ENCODE measurements at regions of chr17 and their contacts with region 1.

Region 1: DNA sequence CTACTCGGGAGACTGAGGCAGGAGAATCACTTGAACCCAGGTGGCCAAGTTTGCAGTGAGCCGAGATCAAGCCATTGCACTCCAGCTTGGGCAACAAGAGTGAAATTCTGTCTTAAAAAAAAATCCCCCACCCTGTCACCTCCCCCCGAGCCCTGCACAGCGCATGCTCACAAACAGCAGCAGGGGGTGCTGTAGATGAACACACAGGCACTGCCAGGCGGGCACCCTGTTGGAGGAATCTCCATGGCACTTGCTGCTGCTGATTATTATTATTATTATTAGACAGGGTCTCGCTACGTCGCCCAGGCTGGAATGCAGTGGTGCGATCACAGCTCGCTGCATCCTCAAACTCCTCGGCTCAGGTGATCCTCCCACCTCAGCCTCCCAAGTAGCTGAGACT is 24.6 kb downstream of the FZD2 start:
- DNase-seq: no peak
- H3K4me3 ChIP-seq: no peak overlapping the region
- H3K27ac ChIP-seq: no peak overlapping the region
- H3K4me1 ChIP-seq: no peaks in the 10 kb centered on the region
- H3K27me3 ChIP-seq: peaks cover 2% of the 10 kb centered on the region
- CTCF ChIP-seq: peak in 1 of 2 donors; percentile 7

Region 2: GRCh38 chr17:43940630-43941029 is 641.2 kb before region 1 on chr17:
- CTCF ChIA-PET with region 1: no interaction called
- dilution Hi-C with region 1: no loop called
- in situ Hi-C with region 1: no loop called
- intact Hi-C with region 1: no loop called
- DNase-seq: no peak
- H3K4me3 ChIP-seq: no peak overlapping the region
- H3K27ac ChIP-seq: no peak overlapping the region
- H3K4me1 ChIP-seq: peaks cover 9% of the 10 kb centered on the region
- H3K27me3 ChIP-seq: no peaks in the 10 kb centered on the region
- CTCF ChIP-seq: peak; percentile 40 to 45

Region 3: GRCh38 chr17:44664867-44665266 is 83.0 kb after region 1 on chr17:
- CTCF ChIA-PET with region 1: no interaction called
- dilution Hi-C with region 1: loop called (anchors 5 kb)
- in situ Hi-C with region 1: no loop called
- intact Hi-C with region 1: no loop called
- DNase-seq: no peak
- H3K4me3 ChIP-seq: no peak overlapping the region
- H3K27ac ChIP-seq: no peak overlapping the region
- H3K4me1 ChIP-seq: no peaks in the 10 kb centered on the region
- H3K27me3 ChIP-seq: no peaks in the 10 kb centered on the region
- CTCF ChIP-seq: no peak

Measured in mammary epithelial cell (primary cell).